Common myeloid progenitor, CD34-positive (primary cell): ENCODE measurements at regions of chr4 and their contacts with region 1.

Region 1: DNA sequence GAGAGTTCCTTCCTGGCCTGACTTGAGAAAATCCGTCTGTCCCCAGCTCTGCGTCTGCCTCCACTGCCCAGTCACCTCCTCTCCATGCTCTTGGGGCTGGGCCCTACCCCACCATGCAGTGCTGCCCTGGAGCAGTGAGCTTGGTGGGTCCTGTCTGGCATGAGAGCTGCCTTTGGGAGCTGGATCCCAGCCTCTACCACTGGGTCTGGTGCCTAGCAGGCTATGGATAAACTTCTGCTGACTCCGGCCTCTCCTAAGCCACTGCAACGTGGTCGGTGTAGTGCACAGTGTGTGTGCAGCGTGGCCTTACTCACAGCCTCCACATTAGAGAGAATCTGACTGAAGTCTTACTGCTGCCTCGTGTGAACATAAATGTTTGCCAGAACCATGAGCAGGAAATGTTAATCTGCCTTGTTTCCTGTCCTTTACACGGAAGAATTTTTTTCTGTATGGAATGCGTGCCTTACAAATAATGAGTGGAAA is 47.6 kb downstream of the HTT start:
- DNase-seq: peak; percentile 29 to 58 (median 54)
- H3K4me3 ChIP-seq: no peak overlapping the region
- H3K27ac ChIP-seq: peak overlapping the region in 1 of 2 experiments; percentile 40
- H3K4me1 ChIP-seq: peaks cover 0 to 23% (median 14%) of the 10 kb centered on the region in 4 experiments
- H3K27me3 ChIP-seq: no peaks in the 10 kb centered on the region

Region 2: GRCh38 chr4:3136453-3136852 is 14.3 kb after region 1 on chr4:
- CTCF ChIA-PET with region 1: interaction called, 12 read pairs
- POLR2A ChIA-PET with region 1: no interaction called
- DNase-seq: peak; percentile 25 to 59 (median 56)
- H3K4me3 ChIP-seq: no peak overlapping the region
- H3K27ac ChIP-seq: no peak overlapping the region
- H3K4me1 ChIP-seq: no peaks in the 10 kb centered on the region
- H3K27me3 ChIP-seq: no peaks in the 10 kb centered on the region

Region 3: GRCh38 chr4:3148926-3149325 is 26.8 kb after region 1 on chr4:
- CTCF ChIA-PET with region 1: no interaction called
- POLR2A ChIA-PET with region 1: no interaction called
- DNase-seq: no peak
- H3K4me3 ChIP-seq: no peak overlapping the region
- H3K27ac ChIP-seq: no peak overlapping the region
- H3K4me1 ChIP-seq: no peaks in the 10 kb centered on the region
- H3K27me3 ChIP-seq: no peaks in the 10 kb centered on the region

Region 4: GRCh38 chr4:3186609-3187008 is 64.5 kb after region 1 on chr4:
- CTCF ChIA-PET with region 1: no interaction called
- POLR2A ChIA-PET with region 1: no interaction called
- DNase-seq: no peak
- H3K4me3 ChIP-seq: no peak overlapping the region
- H3K27ac ChIP-seq: no peak overlapping the region
- H3K4me1 ChIP-seq: no peaks in the 10 kb centered on the region
- H3K27me3 ChIP-seq: no peaks in the 10 kb centered on the region